HepG2 (cell line): ENCODE measurements at regions of chr14 and their contacts with region 1.

Region 1: GRCh38 chr14:24093901-24094761 is at the start of gene PCK2:
- DNase-seq: peak; percentile 99
- ATAC-seq: peak; percentile 86
- H3K4me3 ChIP-seq: peak within 1 kb of the TSS; percentile 86 to 98 (median 97)
- H3K27ac ChIP-seq: peak within 1 kb of the TSS; percentile 87
- H3K4me1 ChIP-seq: peaks cover 62% of the 10 kb centered on the region
- H3K27me3 ChIP-seq: peaks cover 0 to 6% of the 10 kb centered on the region in 2 experiments; a peak in 1 of 5 replicates
- CTCF ChIP-seq: peak; percentile 66
- EP300 ChIP-seq: peak; percentile 23 to 86; a peak in 3 of 4 replicates
- POLR2A ChIP-seq: peak in 1 of 2 experiments; percentile 98; a peak in 2 of 4 replicates
- RAD21 ChIP-seq: peak; percentile 83
- total RNA-seq, gene PCK2: 118 and 129 TPM in 2 replicates

Region 2: GRCh38 chr14:23640524-23641141 is 453.5 kb before region 1 on chr14:
- CTCF ChIA-PET with region 1: no interaction called
- POLR2A ChIA-PET with region 1: interaction called, 23 read pairs
- in situ Hi-C with region 1: no loop called
- intact Hi-C with region 1: no loop called
- DNase-seq: peak; percentile 54
- ATAC-seq: no peak
- H3K4me3 ChIP-seq: peak overlapping the region in 1 of 3 experiments; percentile 74; a peak in 1 of 6 replicates
- H3K27ac ChIP-seq: peak overlapping the region; percentile 59
- H3K4me1 ChIP-seq: peaks cover 65% of the 10 kb centered on the region
- H3K27me3 ChIP-seq: no peaks in the 10 kb centered on the region; a peak in 1 of 5 replicates
- CTCF ChIP-seq: no peak
- EP300 ChIP-seq: no peak
- POLR2A ChIP-seq: peak in 1 of 2 experiments; percentile 77; a peak in 2 of 4 replicates
- RAD21 ChIP-seq: no peak

Region 3: GRCh38 chr14:24058260-24058950 is 35.7 kb before region 1 on chr14:
- CTCF ChIA-PET with region 1: interaction called, 109 read pairs
- POLR2A ChIA-PET with region 1: interaction called, 226 read pairs
- in situ Hi-C with region 1: loop called (anchors 5 kb)
- intact Hi-C with region 1: loop called (anchors 1 kb)
- DNase-seq: peak; percentile 89
- ATAC-seq: peak; percentile 84
- H3K4me3 ChIP-seq: no peak overlapping the region
- H3K27ac ChIP-seq: no peak overlapping the region
- H3K4me1 ChIP-seq: peaks cover 40% of the 10 kb centered on the region
- H3K27me3 ChIP-seq: peaks cover 19 to 48% of the 10 kb centered on the region in 2 experiments; a peak in 4 of 5 replicates
- CTCF ChIP-seq: peak; percentile 99
- EP300 ChIP-seq: no peak
- POLR2A ChIP-seq: no peak
- RAD21 ChIP-seq: peak; percentile 99

Region 4: DNA sequence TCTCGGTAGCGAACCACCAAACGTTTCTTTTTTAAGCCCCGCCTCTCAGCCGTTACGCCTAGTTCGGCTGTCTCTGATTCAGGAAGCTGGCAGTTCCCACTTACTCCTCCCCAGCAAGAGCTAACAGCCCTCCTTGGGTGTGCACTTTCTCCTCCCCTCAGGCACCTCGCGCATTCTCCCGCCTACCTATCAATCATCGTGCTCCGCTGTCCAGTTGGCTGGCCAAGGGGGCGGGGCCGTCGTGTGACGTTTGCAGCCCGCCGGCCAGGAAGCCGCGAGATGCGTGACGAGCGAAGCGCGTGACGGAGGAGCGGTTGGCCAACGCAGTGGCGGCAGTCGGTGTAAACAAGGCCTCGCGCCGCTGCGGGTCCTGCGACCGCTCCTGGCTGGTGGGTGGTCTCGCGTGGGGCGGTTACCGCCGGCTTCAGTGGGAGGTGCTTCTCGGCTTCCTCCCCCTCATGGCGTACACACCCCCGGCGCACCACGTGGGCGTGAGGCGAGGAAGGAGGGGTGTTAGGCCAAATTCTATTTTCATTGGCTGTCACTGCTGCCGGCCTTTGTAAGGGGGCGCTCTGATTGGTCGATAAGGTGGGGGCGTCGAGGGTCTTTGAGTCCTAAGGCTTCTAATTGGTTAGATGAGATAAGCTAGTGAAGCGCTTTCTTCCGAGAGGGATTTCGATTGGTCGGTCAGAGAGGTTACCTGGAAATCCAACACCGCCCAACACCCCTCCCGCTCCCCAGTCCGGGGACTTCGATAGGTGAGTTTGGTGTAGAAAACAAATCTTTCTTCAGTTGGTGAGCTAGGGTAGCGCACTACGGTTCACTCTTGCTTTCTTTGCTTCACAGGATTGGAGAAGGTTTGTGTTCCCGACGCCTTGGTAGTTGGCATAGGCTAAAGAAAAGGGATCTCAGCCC is 20.7 kb after region 1 on chr14 and contains the starts of genes DCAF11 and NRL:
- CTCF ChIA-PET with region 1: interaction called, 31 read pairs
- POLR2A ChIA-PET with region 1: interaction called, 627 read pairs
- in situ Hi-C with region 1: no loop called
- intact Hi-C with region 1: loop called (anchors 1 kb)
- DNase-seq: peak; percentile 100
- ATAC-seq: peak; percentile 88
- H3K4me3 ChIP-seq: peak within 1 kb of the TSS; percentile 66 to 96 (median 85)
- H3K27ac ChIP-seq: peak within 1 kb of the TSS; percentile 98
- H3K4me1 ChIP-seq: peaks cover 48% of the 10 kb centered on the region
- H3K27me3 ChIP-seq: no peaks in the 10 kb centered on the region; a peak in 1 of 5 replicates
- CTCF ChIP-seq: peak; percentile 50
- EP300 ChIP-seq: peak in 1 of 2 experiments; percentile 77; a peak in 2 of 4 replicates
- POLR2A ChIP-seq: peak in 1 of 2 experiments; percentile 97; a peak in 2 of 4 replicates
- RAD21 ChIP-seq: peak; percentile 78
- total RNA-seq, gene DCAF11: 257 and 342 TPM in 2 replicates
- total RNA-seq, gene NRL: 4.7 and 5.2 TPM in 2 replicates

Region 5: GRCh38 chr14:24160850-24161804 is 67.0 kb after region 1 on chr14 and contains the start of gene IRF9:
- CTCF ChIA-PET with region 1: interaction called, 10 read pairs
- POLR2A ChIA-PET with region 1: interaction called, 88 read pairs
- in situ Hi-C with region 1: no loop called
- intact Hi-C with region 1: loop called (anchors 1 kb)
- DNase-seq: peak; percentile 99
- ATAC-seq: peak; percentile 92
- H3K4me3 ChIP-seq: peak within 1 kb of the TSS; percentile 50 to 78 (median 64)
- H3K27ac ChIP-seq: peak within 1 kb of the TSS; percentile 62
- H3K4me1 ChIP-seq: peaks cover 28% of the 10 kb centered on the region
- H3K27me3 ChIP-seq: no peaks in the 10 kb centered on the region; a peak in 1 of 5 replicates
- CTCF ChIP-seq: peak; percentile 100
- EP300 ChIP-seq: peak; percentile 55 to 85; a peak in 3 of 4 replicates
- POLR2A ChIP-seq: peak in 1 of 2 experiments; percentile 66; a peak in 2 of 4 replicates
- RAD21 ChIP-seq: peak; percentile 99
- total RNA-seq, gene IRF9: 13.8 and 14.9 TPM in 2 replicates

Region 6: GRCh38 chr14:24241829-24242443 is 147.8 kb after region 1 on chr14:
- CTCF ChIA-PET with region 1: no interaction called
- POLR2A ChIA-PET with region 1: interaction called, 61 read pairs
- in situ Hi-C with region 1: no loop called
- intact Hi-C with region 1: no loop called
- DNase-seq: peak; percentile 97
- ATAC-seq: peak; percentile 91
- H3K4me3 ChIP-seq: peak overlapping the region; percentile 64 to 81 (median 71)
- H3K27ac ChIP-seq: peak overlapping the region; percentile 91
- H3K4me1 ChIP-seq: peaks cover 47% of the 10 kb centered on the region
- H3K27me3 ChIP-seq: no peaks in the 10 kb centered on the region; a peak in 1 of 5 replicates
- CTCF ChIP-seq: peak; percentile 62
- EP300 ChIP-seq: peak in 1 of 2 experiments; percentile 86; a peak in 2 of 4 replicates
- POLR2A ChIP-seq: no peak
- RAD21 ChIP-seq: 0 out of 2 replicates have a peak, but pooled peaks have one; percentile 30

Region 7: GRCh38 chr14:24279301-24280186 is 185.4 kb after region 1 on chr14:
- CTCF ChIA-PET with region 1: no interaction called
- POLR2A ChIA-PET with region 1: no interaction called
- in situ Hi-C with region 1: no loop called
- intact Hi-C with region 1: no loop called
- DNase-seq: no peak
- ATAC-seq: no peak
- H3K4me3 ChIP-seq: no peak overlapping the region
- H3K27ac ChIP-seq: no peak overlapping the region
- H3K4me1 ChIP-seq: no peaks in the 10 kb centered on the region
- H3K27me3 ChIP-seq: no peaks in the 10 kb centered on the region
- CTCF ChIP-seq: peak; percentile 33; the same call in 1 of the 2 replicates
- EP300 ChIP-seq: no peak
- POLR2A ChIP-seq: 0 out of 4 replicates have a peak, but pooled peaks of 1 of the 2 experiments have one; percentile 10
- RAD21 ChIP-seq: no peak

Region 8: DNA sequence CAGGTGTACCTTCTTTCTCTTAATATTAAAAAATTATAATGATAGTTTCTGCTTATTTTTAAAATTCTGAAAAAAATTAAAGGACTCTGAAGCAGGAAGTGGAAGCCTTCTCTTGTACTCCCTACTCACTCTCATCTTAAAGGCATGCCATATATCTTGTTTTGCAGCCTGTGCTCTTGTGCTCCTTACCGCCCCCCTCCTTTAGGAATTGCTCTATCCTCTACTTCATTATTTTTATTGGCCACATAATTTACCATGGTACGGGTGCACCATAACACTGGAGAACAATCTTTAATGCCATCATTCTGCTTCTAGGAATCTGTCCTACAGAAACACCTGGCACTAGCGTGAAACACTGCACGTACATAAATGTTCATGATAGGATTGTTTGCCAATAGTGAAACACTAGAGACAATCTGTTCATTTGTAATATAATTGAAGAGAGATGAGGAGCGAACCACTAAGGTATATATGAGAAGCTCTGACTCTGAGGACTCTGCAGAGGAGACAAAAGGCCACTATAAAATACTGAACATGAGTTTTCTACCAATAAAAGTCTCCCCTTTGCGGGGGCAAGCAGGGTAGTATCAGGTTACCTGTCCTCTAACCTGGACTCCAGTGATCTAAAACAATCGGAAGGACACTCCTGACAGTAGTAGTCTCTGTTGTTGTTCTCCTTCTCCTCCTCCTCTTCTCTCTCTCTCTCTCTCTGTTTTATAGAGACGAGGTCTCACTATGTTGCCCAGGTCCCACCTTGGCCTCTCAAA is 298.4 kb after region 1 on chr14:
- CTCF ChIA-PET with region 1: no interaction called
- POLR2A ChIA-PET with region 1: no interaction called
- in situ Hi-C with region 1: no loop called
- intact Hi-C with region 1: no loop called
- DNase-seq: no peak
- ATAC-seq: 0 out of 3 replicates have a peak, but pooled peaks have one; percentile 2
- H3K4me3 ChIP-seq: no peak overlapping the region; a peak in 1 of 6 replicates
- H3K27ac ChIP-seq: no peak overlapping the region
- H3K4me1 ChIP-seq: peaks cover 31% of the 10 kb centered on the region
- H3K27me3 ChIP-seq: peaks cover 7 to 42% of the 10 kb centered on the region in 2 experiments; a peak in 4 of 5 replicates
- CTCF ChIP-seq: 0 out of 2 replicates have a peak, but pooled peaks have one; percentile 11
- EP300 ChIP-seq: no peak
- POLR2A ChIP-seq: no peak
- RAD21 ChIP-seq: no peak

Region 9: DNA sequence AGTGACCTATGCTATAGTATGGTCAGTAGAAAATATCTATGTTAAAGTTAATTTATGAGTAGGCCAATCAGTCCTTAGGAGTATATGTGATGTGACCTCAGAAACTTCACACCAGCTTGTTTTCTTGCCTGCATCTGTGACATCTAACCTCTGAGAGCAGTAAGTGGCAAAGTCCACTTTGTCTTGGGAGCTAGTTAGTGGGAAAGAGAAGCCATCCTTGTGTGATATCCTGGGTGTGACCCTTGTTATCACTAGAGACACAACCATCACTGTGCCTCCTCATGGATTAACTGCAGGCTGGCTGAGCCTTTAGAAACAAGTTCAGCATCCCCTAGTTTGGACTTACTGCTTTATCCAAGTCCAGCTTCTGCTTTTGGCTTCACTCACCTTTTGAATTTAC is 1126.4 kb after region 1 on chr14:
- CTCF ChIA-PET with region 1: no interaction called
- POLR2A ChIA-PET with region 1: no interaction called
- in situ Hi-C with region 1: no loop called
- intact Hi-C with region 1: no loop called
- DNase-seq: no peak
- ATAC-seq: no peak
- H3K4me3 ChIP-seq: no peak overlapping the region
- H3K27ac ChIP-seq: no peak overlapping the region
- H3K4me1 ChIP-seq: no peaks in the 10 kb centered on the region
- H3K27me3 ChIP-seq: no peaks in the 10 kb centered on the region
- CTCF ChIP-seq: no peak
- EP300 ChIP-seq: no peak
- POLR2A ChIP-seq: no peak
- RAD21 ChIP-seq: no peak